Activated T-helper 1 cell treated with anti-CD3 and anti-CD28 coated beads, Interleukin-12 subunit alpha, Interleukin-12 subunit beta, Interleukin-2, Interleukin-4 antibody, amounts not matched to agents 30 ng/mL and 10 ng/mL and 1 ng/mL, durations not matched to agents 14 hours and 24 hours and 36 hours (primary cell): ENCODE measurements at regions of chr4 and their contacts with region 1.

Region 1: DNA sequence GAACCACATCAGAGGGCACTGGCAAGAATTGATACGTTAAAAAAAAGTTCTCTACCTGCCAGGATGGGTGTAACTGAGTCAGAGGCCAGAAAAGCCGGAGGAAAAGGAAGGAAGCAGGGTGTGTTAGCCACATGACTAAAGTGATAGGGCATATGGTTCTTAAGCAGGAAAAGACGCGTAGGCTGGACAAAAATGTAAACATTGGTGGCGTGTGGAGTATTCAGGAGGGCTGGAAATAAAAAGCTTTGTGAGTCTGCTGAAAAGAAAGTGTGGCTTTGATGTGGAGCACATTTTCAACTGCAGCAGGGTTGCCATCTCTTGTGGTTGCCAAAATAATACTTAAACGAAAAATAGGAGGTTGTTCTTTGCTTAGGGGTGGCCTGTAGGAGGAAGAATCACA is 186.5 kb upstream of the RPL34 start:
- DNase-seq: peak; percentile 47
- H3K4me3 Mint-ChIP-seq: peak overlapping the region; percentile 28
- H3K27ac Mint-ChIP-seq: peak overlapping the region; percentile 80
- H3K4me1 Mint-ChIP-seq: peaks cover 39% of the 10 kb centered on the region
- H3K27me3 Mint-ChIP-seq: no peaks in the 10 kb centered on the region

Region 2: GRCh38 chr4:106898621-106899230 is 1535.1 kb before region 1 on chr4:
- intact Hi-C with region 1: no loop called
- DNase-seq: no peak
- H3K4me3 Mint-ChIP-seq: no peak overlapping the region
- H3K27ac Mint-ChIP-seq: no peak overlapping the region
- H3K4me1 Mint-ChIP-seq: no peaks in the 10 kb centered on the region
- H3K27me3 Mint-ChIP-seq: no peaks in the 10 kb centered on the region

Region 3: DNA sequence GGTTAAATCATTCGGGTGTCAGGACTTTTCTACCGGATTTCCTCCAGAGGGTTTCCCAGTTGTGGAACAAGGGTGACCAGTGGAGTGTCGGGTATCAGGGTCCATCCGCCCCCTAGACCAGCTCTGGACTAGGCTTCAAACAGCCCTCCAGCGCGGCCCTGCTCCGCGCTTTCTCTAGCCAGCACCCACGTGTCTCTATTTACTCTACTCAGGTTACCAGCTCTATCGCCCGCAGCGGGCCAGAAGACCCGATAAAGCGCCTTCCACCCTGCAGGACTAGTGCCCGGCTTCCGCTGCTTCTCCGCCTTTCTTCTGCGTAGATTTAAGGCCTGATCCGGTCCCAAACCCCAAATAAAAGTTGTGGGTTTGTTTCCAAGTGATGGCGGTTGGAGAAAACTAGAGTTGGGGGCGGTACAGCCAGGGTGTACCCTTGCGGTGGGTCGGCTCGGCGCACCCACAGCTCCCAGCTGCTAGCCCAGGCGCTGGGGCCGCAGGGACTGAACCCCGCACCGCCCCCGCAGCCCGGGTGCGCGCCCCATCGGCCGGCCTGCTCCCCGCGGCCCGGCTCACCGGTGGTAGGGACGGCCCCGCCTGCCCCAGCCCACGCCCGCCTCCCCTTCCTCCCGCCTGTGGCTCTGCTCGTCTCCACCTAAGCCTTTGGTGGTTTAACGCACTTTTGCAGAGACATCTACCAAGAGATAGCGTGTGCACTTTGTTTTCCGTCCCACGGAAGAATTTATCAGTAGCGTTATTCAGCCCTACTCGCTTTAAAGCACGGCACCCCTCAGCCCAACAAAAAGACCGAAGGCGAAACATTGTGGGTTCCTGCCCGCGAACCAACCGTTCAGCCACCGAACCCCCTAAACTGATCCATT is 267.2 kb before region 1 on chr4:
- intact Hi-C with region 1: loop called (anchors 2 kb)
- DNase-seq: peak; percentile 68
- H3K4me3 Mint-ChIP-seq: peak overlapping the region; percentile 98
- H3K27ac Mint-ChIP-seq: peak overlapping the region; percentile 98
- H3K4me1 Mint-ChIP-seq: peaks cover 68% of the 10 kb centered on the region
- H3K27me3 Mint-ChIP-seq: peaks cover 12% of the 10 kb centered on the region

Region 4: GRCh38 chr4:108355186-108355901 is 78.5 kb before region 1 on chr4:
- intact Hi-C with region 1: loop called (anchors 2 kb)
- DNase-seq: peak; percentile 54
- H3K4me3 Mint-ChIP-seq: peak overlapping the region; percentile 76
- H3K27ac Mint-ChIP-seq: peak overlapping the region; percentile 30
- H3K4me1 Mint-ChIP-seq: peaks cover 74% of the 10 kb centered on the region
- H3K27me3 Mint-ChIP-seq: peaks cover 5% of the 10 kb centered on the region

Region 5: DNA sequence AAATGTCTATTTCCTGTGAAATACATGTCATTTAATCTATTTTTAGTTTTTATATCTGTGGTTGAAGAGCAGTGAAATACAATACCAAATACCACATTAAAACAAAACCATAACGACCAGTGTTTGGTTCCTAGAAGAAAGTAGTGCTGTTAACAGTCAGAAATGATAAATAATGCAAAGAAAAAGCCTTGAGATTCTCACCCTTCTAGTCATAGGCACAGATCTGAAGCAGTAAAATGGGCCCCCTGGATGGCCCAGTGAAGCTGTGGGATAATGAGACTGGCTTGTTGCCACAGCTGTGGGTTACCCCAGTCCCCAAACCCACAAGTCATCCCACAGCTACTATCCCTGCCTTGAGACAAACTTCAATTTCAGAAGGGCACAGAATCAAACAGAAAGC is 49.2 kb after region 1 on chr4:
- intact Hi-C with region 1: loop called (anchors 2 kb)
- DNase-seq: no peak
- H3K4me3 Mint-ChIP-seq: peak overlapping the region; percentile 46
- H3K27ac Mint-ChIP-seq: peak overlapping the region; percentile 37
- H3K4me1 Mint-ChIP-seq: peaks cover 56% of the 10 kb centered on the region
- H3K27me3 Mint-ChIP-seq: no peaks in the 10 kb centered on the region